A549 (cell line): ENCODE measurements at regions of chr2 and their contacts with region 1.

Region 1: DNA sequence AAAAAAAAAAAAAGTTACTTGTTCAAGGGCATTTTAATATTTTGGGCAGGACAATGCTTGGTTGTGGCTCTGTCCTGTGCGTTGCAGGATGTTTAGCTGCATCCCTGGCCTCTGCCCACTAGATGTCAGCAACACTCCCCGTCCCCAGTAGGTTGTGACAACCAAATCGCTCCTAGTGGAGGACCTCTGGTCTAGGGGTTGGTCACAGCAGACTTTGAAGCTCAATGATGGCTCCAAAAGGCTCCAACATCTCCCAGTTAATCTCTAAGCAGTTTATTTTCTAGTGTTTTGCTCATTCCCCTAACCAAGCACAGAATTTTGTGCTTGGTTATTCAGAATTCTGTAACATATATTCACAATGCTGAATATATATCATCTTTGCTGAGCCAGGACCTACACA is 67.0 kb downstream of the CHRNA1 start:
- DNase-seq: peak; percentile 76 to 91
- ATAC-seq: peak; percentile 95 to 98
- H3K4me3 ChIP-seq: no peak overlapping the region
- H3K27ac ChIP-seq: no peak overlapping the region
- H3K4me1 ChIP-seq: no peaks in the 10 kb centered on the region
- CTCF ChIP-seq: peak; percentile 77
- EP300 ChIP-seq: no peak
- POLR2A ChIP-seq: no peak
- RAD21 ChIP-seq: peak; percentile 54 to 66; a peak in 4 of 5 replicates

Region 2: GRCh38 chr2:174568425-174568824 is 128.8 kb before region 1 on chr2:
- CTCF ChIA-PET with region 1: interaction called, 10 read pairs
- POLR2A ChIA-PET with region 1: no interaction called
- DNase-seq: no peak
- ATAC-seq: no peak
- H3K4me3 ChIP-seq: no peak overlapping the region
- H3K27ac ChIP-seq: no peak overlapping the region
- H3K4me1 ChIP-seq: peaks cover 4% of the 10 kb centered on the region; the same call in 1 of the 3 replicates
- CTCF ChIP-seq: no peak
- EP300 ChIP-seq: no peak
- POLR2A ChIP-seq: no peak
- RAD21 ChIP-seq: no peak

Region 3: GRCh38 chr2:174708713-174709112 is 11.5 kb after region 1 on chr2:
- CTCF ChIA-PET with region 1: interaction called, 22 read pairs
- POLR2A ChIA-PET with region 1: no interaction called
- DNase-seq: no peak
- ATAC-seq: no peak
- H3K4me3 ChIP-seq: no peak overlapping the region
- H3K27ac ChIP-seq: no peak overlapping the region
- H3K4me1 ChIP-seq: peaks cover 7% of the 10 kb centered on the region; the same call in 1 of the 3 replicates
- CTCF ChIP-seq: no peak
- EP300 ChIP-seq: no peak
- POLR2A ChIP-seq: no peak
- RAD21 ChIP-seq: no peak

Region 4: GRCh38 chr2:174738841-174739240 is 41.6 kb after region 1 on chr2:
- CTCF ChIA-PET with region 1: interaction called, 26 read pairs
- POLR2A ChIA-PET with region 1: no interaction called
- DNase-seq: no peak
- ATAC-seq: no peak
- H3K4me3 ChIP-seq: no peak overlapping the region
- H3K27ac ChIP-seq: no peak overlapping the region
- H3K4me1 ChIP-seq: no peaks in the 10 kb centered on the region
- CTCF ChIP-seq: no peak
- EP300 ChIP-seq: no peak
- POLR2A ChIP-seq: no peak
- RAD21 ChIP-seq: no peak

Region 5: DNA sequence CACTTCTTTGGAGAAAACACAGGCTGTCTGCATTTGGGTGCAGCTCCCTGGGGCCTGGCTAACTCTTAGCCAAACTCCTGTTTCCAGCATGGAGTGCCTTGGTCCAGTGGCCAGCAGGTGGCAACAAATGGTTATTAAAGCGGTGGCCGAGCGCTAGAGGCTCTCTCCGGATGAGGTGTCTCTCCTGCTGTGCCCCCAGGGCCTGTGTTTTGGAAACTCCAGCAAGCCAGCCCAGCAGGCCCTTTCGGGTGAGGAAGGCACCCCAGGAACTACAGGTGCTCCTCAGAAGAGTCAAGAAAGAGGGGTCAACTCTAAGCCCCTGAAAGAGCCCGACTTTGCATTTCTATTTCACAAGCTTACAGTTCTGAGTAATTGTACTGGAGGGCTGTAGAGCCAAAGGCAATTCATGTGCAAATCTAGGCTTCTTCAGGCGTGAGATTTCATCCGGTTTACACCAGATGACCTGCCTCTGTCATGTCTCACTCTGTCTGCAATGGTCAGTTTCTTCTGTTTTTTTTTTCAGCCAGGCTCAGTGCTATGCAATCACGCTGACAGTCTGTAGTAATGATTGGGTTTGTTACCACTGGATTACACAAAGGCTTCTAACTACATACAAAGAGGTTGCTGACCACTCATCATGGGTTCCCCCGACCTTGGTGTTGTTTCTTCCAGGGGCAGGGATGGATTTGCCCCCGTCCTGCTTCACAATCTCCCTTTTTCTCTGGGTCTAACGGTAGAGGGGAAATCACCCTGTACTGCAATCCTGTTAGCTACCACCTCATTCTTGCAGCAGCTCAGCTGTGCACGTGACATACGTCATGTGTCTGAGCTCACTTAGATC is 74.6 kb after region 1 on chr2:
- CTCF ChIA-PET with region 1: interaction called, 12 read pairs
- POLR2A ChIA-PET with region 1: no interaction called
- DNase-seq: peak; percentile 70 to 87
- ATAC-seq: peak; percentile 99
- H3K4me3 ChIP-seq: no peak overlapping the region
- H3K27ac ChIP-seq: peak overlapping the region; percentile 41 to 77; a peak in 5 of 6 replicates
- H3K4me1 ChIP-seq: peaks cover 7% of the 10 kb centered on the region
- CTCF ChIP-seq: peak; percentile 93
- EP300 ChIP-seq: no peak
- POLR2A ChIP-seq: no peak
- RAD21 ChIP-seq: peak; percentile 96 to 97

Region 6: GRCh38 chr2:175326801-175327200 is 629.5 kb after region 1 on chr2:
- CTCF ChIA-PET with region 1: interaction called, 12 read pairs
- POLR2A ChIA-PET with region 1: no interaction called
- DNase-seq: no peak
- ATAC-seq: no peak
- H3K4me3 ChIP-seq: no peak overlapping the region
- H3K27ac ChIP-seq: no peak overlapping the region
- H3K4me1 ChIP-seq: no peaks in the 10 kb centered on the region
- CTCF ChIP-seq: no peak
- EP300 ChIP-seq: no peak
- POLR2A ChIP-seq: no peak
- RAD21 ChIP-seq: no peak